ENCODE measurements at regions of chr4 and their contacts with region 1.

Region 1: GRCh38 chr4:165364452-165365080 is 14.2 kb upstream of the CPE start:
- DNase-seq: no peak
- H3K4me3 ChIP-seq: no peak overlapping the region
- H3K27ac ChIP-seq: no peak overlapping the region
- H3K4me1 ChIP-seq: no peaks in the 10 kb centered on the region
- H3K27me3 ChIP-seq: no peaks in the 10 kb centered on the region
- CTCF ChIP-seq: no peak
- EP300 ChIP-seq: no peak
- POLR2A ChIP-seq: no peak

Region 2: DNA sequence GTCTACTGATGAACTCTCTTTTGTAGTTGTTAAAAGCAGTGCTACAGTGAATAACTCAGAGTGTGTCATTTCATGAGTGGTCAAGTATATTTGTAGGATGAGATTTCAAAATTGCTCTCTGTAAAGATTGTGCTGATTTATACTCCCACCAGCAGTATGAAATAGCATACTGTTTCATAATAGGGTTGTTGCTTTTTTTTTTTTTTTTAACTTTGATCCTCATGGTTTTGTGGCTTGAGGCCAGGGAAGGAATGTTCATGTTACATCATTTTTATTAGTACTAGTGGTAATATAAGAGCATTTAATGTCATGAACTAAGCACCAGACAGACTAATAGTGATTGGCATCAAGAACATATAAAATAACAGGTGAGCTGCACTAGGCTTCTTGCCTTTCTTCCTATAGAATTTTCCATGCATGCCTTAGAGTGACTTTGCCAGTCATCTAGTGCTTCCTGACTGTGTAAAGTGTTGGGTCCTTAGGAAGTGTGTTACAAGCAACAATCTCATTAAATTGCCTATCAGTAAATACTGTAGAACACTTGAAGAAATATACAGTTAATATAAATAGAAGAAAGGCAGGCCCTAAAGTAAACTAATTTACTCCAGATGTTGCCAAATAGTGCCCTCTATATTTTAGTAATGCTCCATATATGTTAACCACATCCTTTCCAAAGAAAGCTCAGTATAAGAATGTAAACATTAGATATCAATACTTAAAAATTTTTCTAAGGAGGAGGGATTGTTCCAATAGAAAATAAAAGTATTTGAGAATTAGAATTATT is 75.7 kb before region 1 on chr4:
- intact Hi-C with region 1: no loop called
- DNase-seq: no peak
- H3K4me3 ChIP-seq: no peak overlapping the region
- H3K27ac ChIP-seq: no peak overlapping the region
- H3K4me1 ChIP-seq: no peaks in the 10 kb centered on the region
- H3K27me3 ChIP-seq: no peaks in the 10 kb centered on the region
- CTCF ChIP-seq: no peak
- EP300 ChIP-seq: no peak
- POLR2A ChIP-seq: no peak

Region 3: DNA sequence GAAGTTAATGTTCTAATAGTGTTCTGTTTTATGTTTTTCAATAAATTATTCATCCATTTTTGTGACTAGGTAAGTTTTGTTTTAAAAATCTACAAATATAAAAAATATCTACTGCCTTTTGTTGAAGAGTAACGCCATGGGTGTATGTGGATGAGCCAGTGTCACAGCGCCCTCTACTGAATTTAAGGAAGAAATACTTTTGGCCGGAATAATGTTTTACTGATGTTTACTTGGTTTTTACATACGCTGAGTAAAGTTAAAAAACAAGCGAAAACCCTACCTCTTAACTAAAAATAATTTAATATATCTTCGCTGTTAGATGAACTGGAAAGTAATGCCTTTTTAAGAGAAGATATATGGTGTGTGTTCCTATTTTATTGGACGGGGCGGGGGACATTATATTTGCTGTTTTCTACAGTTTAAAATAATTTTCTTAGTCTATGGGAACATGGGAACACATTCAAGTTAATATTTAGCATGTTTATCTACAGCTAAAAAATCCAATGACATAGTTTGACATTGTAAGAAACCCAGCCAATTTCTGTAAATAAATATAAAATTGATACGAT is 100.3 kb after region 1 on chr4:
- intact Hi-C with region 1: loop called in 1 of 4 experiments (anchors 10 kb)
- DNase-seq: peak in 1 of 5 donors; percentile 22
- H3K4me3 ChIP-seq: no peak overlapping the region
- H3K27ac ChIP-seq: no peak overlapping the region
- H3K4me1 ChIP-seq: peaks cover 7% of the 10 kb centered on the region
- H3K27me3 ChIP-seq: no peaks in the 10 kb centered on the region
- CTCF ChIP-seq: peak; percentile 65 to 85 (median 76)
- EP300 ChIP-seq: no peak
- POLR2A ChIP-seq: no peak

Measured in ovary (tissue), 10 donors.